Transverse colon (tissue), 4 donors: ENCODE measurements at regions of chr9 and their contacts with region 1.

Region 1: GRCh38 chr9:23571414-23572104 is 254.5 kb downstream of the ELAVL2 start:
- DNase-seq: no peak
- H3K4me3 ChIP-seq: no peak overlapping the region
- H3K27ac ChIP-seq: no peak overlapping the region
- H3K4me1 ChIP-seq: no peaks in the 10 kb centered on the region
- H3K27me3 ChIP-seq: no peaks in the 10 kb centered on the region
- CTCF ChIP-seq: no peak
- EP300 ChIP-seq: no peak
- POLR2A ChIP-seq: no peak

Region 2: GRCh38 chr9:22363421-22363887 is 1208.1 kb before region 1 on chr9:
- in situ Hi-C with region 1: no loop called
- intact Hi-C with region 1: loop called (anchors 10 kb)
- DNase-seq: no peak
- H3K4me3 ChIP-seq: no peak overlapping the region
- H3K27ac ChIP-seq: no peak overlapping the region
- H3K4me1 ChIP-seq: no peaks in the 10 kb centered on the region
- H3K27me3 ChIP-seq: no peaks in the 10 kb centered on the region
- CTCF ChIP-seq: no peak
- EP300 ChIP-seq: no peak
- POLR2A ChIP-seq: no peak